HCT116 (cell line): ENCODE measurements at regions of chr10 and their contacts with region 1.

Region 1: GRCh38 chr10:61750929-61751471 is 88.3 kb downstream of the CABCOCO1 start:
- DNase-seq: peak; percentile 64
- ATAC-seq: peak; percentile 98
- H3K4me3 ChIP-seq: no peak overlapping the region
- H3K27ac ChIP-seq: no peak overlapping the region
- H3K4me1 ChIP-seq: peaks cover 18 to 37% of the 10 kb centered on the region in 2 experiments
- H3K27me3 ChIP-seq: no peaks in the 10 kb centered on the region
- CTCF ChIP-seq: peak; percentile 53 to 86 (median 76); a peak in 5 of 6 replicates
- POLR2A ChIP-seq: no peak
- RAD21 ChIP-seq: peak; percentile 67

Region 2: DNA sequence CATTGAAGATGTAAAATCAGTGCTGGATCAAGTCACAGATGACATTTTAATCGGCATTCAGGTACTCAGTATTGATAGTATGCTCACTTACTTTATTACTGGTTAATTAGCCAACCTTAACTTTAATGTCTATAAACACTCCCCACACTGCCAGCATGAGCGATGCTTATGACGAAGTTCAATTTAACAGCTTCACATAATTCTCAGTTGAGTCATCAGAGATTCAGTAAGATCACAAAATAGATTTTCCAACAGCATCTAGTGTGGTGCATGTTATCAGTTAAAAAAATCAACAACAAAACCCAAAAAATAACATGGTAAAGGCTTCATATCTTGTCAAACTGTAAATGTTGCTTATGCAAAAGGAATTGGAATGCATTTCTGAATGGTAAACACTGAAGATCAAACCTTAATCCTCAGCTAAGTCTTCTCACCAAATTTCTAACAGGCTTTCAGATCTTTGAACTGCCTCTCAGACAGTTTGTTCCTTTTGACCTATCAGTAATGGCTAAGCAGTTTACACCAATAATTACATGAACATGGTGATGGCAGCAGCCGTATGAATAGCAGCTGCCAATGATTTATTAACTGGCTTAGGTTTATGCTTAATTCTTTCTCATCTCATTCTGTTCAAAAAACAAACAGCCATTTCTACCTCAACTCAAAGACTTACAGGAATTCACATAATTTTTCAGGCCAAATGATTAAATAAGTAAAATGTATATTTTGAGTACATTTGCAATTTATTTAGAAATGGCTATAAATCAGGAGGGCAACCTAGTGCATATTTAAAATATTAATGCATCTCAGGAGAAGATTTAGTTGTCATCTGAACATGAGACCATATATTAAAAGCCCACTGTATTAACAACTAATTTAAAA is 10.2 kb after region 1 on chr10:
- CTCF ChIA-PET with region 1: interaction called, 15 read pairs
- POLR2A ChIA-PET with region 1: no interaction called
- RAD21 ChIA-PET with region 1: no interaction called
- intact Hi-C with region 1: no loop called
- DNase-seq: no peak
- ATAC-seq: peak; percentile 70
- H3K4me3 ChIP-seq: peak overlapping the region in 1 of 2 experiments; percentile 6; a peak in 1 of 4 replicates
- H3K27ac ChIP-seq: peak overlapping the region; percentile 61; the same call in 1 of the 2 replicates
- H3K4me1 ChIP-seq: peaks cover 28 to 29% of the 10 kb centered on the region in 2 experiments; a peak in 3 of 4 replicates
- H3K27me3 ChIP-seq: no peaks in the 10 kb centered on the region
- CTCF ChIP-seq: no peak
- POLR2A ChIP-seq: no peak
- RAD21 ChIP-seq: no peak

Region 3: GRCh38 chr10:61835069-61835945 is 84.3 kb after region 1 on chr10:
- CTCF ChIA-PET with region 1: interaction called, 68 read pairs
- POLR2A ChIA-PET with region 1: interaction called, 8 read pairs
- RAD21 ChIA-PET with region 1: interaction called, 6 to 15 read pairs
- intact Hi-C with region 1: loop called (anchors 1 kb)
- DNase-seq: peak; percentile 71
- ATAC-seq: peak; percentile 62
- H3K4me3 ChIP-seq: peak overlapping the region in 1 of 2 experiments; percentile 41; a peak in 1 of 4 replicates
- H3K27ac ChIP-seq: peak overlapping the region; percentile 85; the same call in 1 of the 2 replicates
- H3K4me1 ChIP-seq: peaks cover 32 to 50% of the 10 kb centered on the region in 2 experiments
- H3K27me3 ChIP-seq: no peaks in the 10 kb centered on the region
- CTCF ChIP-seq: peak; percentile 62 to 63 (median 62); a peak in 5 of 6 replicates
- POLR2A ChIP-seq: no peak
- RAD21 ChIP-seq: peak; percentile 80

Region 4: DNA sequence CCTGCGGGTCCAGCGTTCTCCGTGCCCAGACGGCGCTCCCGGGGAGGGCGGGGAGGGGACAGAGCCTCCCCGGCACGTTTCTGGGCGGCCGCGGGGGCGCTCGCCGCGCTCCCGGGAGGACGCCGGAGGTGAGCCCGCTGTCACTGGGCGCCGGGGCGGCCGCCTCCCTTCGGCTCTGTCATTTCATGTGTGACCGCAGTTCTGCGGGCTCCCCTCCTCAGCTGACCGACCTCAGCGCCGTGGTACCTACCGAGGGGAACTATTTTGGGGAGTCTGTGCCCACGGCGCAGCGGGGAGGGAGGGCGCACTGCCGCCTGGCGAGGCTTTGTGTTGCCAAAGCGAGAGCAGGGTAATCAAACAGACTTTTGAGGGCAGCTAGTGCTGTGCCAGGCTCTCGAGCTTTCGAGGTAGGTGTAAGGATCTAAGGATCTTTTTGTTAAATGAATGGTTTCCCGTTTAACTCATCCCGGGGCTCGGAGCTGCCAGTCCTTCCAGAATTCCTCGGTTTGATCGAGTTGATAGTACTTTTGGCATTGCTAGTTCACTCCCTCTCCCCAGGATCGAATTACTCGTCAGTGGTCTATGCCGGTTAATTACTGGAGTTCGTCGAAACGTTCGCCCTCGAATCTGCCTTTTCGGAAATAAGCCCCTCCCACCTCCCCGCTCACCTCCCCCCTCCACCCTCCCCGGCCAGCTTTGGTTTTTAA is 152.4 kb after region 1 on chr10:
- CTCF ChIA-PET with region 1: interaction called, 10 read pairs
- POLR2A ChIA-PET with region 1: interaction called, 3 read pairs
- RAD21 ChIA-PET with region 1: no interaction called
- intact Hi-C with region 1: loop called (anchors 5 kb)
- DNase-seq: peak; percentile 42
- ATAC-seq: peak; percentile 64
- H3K4me3 ChIP-seq: peak overlapping the region; percentile 64 to 75
- H3K27ac ChIP-seq: peak overlapping the region; percentile 92
- H3K4me1 ChIP-seq: peaks cover 13 to 29% of the 10 kb centered on the region in 2 experiments; a peak in 3 of 4 replicates
- H3K27me3 ChIP-seq: no peaks in the 10 kb centered on the region
- CTCF ChIP-seq: peak in 2 of 3 experiments; percentile 23 to 24; a peak in 2 of 6 replicates
- POLR2A ChIP-seq: no peak
- RAD21 ChIP-seq: no peak